Activated naive CD4-positive, alpha-beta T cell treated with anti-CD3 and anti-CD28 coated beads, Interleukin-2, amount 10 ng/mL, durations not matched to agents 7 days and 5 days (primary cell): ENCODE measurements at regions of chr15 and their contacts with region 1.

Region 1: GRCh38 chr15:78195735-78196201 is 38.6 kb downstream of the ACSBG1 start:
- DNase-seq: peak; percentile 63
- H3K4me3 Mint-ChIP-seq: no peak overlapping the region
- H3K27ac Mint-ChIP-seq: no peak overlapping the region
- H3K4me1 Mint-ChIP-seq: no peaks in the 10 kb centered on the region
- H3K27me3 Mint-ChIP-seq: peaks cover 36% of the 10 kb centered on the region

Region 2: GRCh38 chr15:77966540-77967290 is 229.1 kb before region 1 on chr15:
- CTCF ChIA-PET with region 1: interaction called, 14 read pairs
- DNase-seq: peak; percentile 67
- H3K4me3 Mint-ChIP-seq: no peak overlapping the region
- H3K27ac Mint-ChIP-seq: no peak overlapping the region
- H3K4me1 Mint-ChIP-seq: no peaks in the 10 kb centered on the region
- H3K27me3 Mint-ChIP-seq: peaks cover 39% of the 10 kb centered on the region

Region 3: DNA sequence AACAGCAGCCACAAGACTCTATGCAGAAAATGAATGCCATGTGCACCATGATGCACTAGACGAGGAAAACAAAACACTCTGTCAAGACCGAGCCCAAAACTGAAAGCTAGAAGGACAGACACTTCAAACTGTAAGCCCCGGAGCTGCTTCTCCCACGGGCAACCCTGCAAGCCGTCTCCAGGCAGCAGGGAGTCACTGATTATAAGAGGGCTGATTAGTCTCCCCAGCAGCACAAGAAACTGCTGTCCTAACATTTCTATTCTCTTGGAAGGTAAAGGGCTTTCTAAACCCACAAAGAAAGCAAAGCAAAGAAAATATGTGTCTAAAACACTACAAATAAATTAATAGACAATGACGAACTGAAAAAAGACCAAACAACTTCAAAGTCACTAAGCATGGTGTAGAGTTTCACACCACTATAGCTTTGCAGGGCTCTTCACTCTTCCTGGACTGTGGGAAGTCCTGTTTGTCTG is 133.8 kb before region 1 on chr15:
- CTCF ChIA-PET with region 1: no interaction called
- DNase-seq: peak; percentile 68
- H3K4me3 Mint-ChIP-seq: peak overlapping the region; percentile 60
- H3K27ac Mint-ChIP-seq: peak overlapping the region; percentile 95
- H3K4me1 Mint-ChIP-seq: peaks cover 36% of the 10 kb centered on the region
- H3K27me3 Mint-ChIP-seq: no peaks in the 10 kb centered on the region

Region 4: GRCh38 chr15:78131295-78132061 is 64.3 kb before region 1 on chr15 and contains the start of gene CIB2:
- CTCF ChIA-PET with region 1: interaction called, 176 read pairs
- DNase-seq: peak; percentile 84
- H3K4me3 Mint-ChIP-seq: peak within 1 kb of the TSS; percentile 76
- H3K27ac Mint-ChIP-seq: peak within 1 kb of the TSS; percentile 34
- H3K4me1 Mint-ChIP-seq: peaks cover 24% of the 10 kb centered on the region
- H3K27me3 Mint-ChIP-seq: peaks cover 11% of the 10 kb centered on the region

Region 5: DNA sequence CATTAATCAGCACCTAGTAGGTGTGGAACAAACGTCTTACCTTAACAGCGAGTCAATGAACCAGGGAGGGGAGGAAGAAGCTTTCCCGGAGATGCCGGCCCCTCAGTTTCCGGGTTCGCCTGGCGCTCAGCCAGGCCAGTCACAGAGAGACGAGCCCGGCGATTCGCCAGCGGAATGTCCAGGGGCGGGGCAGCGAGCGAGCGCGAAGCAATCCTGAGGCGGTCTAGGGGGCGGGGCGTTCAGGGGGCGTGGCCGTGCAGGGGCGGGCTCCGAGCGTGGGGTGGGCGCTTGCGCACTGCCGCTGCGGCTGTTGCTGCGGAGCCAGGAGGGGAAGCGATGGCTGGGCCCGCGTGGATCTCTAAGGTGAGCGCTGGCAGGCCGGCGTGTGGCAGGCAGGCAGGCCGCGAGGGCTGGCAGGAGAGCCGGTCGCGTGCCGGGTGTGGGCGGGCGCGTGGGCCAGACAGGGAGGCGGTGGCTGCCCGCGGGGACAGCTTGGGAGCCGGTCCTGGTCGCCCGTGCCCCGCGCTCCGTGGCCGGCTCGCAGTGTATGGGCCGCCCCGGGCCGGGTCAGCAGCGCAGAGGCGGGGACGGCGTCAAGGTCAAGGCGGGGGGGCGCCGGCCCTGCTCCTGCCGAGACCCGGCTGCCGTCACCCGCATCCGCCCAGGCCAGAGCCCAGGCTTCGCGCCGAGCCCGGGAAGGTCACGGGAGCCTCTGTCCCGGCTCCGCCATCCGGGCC is 46.5 kb before region 1 on chr15 and contains the start of gene IDH3A:
- CTCF ChIA-PET with region 1: interaction called, 11 read pairs
- DNase-seq: peak; percentile 100
- H3K4me3 Mint-ChIP-seq: peak within 1 kb of the TSS; percentile 90
- H3K27ac Mint-ChIP-seq: peak within 1 kb of the TSS; percentile 88
- H3K4me1 Mint-ChIP-seq: peaks cover 46% of the 10 kb centered on the region
- H3K27me3 Mint-ChIP-seq: no peaks in the 10 kb centered on the region

Region 6: GRCh38 chr15:78177447-78177873 is 18.3 kb before region 1 on chr15:
- CTCF ChIA-PET with region 1: interaction called, 35 read pairs
- DNase-seq: peak; percentile 57
- H3K4me3 Mint-ChIP-seq: no peak overlapping the region
- H3K27ac Mint-ChIP-seq: no peak overlapping the region
- H3K4me1 Mint-ChIP-seq: peaks cover 25% of the 10 kb centered on the region
- H3K27me3 Mint-ChIP-seq: peaks cover 18% of the 10 kb centered on the region

Region 7: DNA sequence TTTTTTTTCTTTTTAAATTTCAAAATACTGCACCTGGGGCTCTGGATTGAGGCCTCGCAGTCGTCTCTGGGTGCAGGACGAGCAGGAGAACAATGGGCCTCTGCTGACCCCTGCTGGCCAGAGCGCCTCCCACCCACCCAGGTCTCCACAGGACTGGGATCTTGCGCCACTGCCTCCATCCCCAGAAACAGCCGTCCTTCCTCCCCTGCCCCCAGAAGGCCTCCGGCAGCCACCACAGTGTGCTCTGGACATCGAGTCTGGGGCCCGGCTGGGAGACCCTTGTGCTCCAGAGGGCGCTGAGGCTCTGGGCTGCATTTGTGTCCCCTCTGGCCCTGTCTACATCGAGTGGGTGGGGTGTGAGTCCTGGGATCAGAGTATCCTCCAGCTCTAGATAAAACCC is 45.2 kb after region 1 on chr15:
- CTCF ChIA-PET with region 1: interaction called, 36 read pairs
- DNase-seq: peak; percentile 90
- H3K4me3 Mint-ChIP-seq: no peak overlapping the region
- H3K27ac Mint-ChIP-seq: no peak overlapping the region
- H3K4me1 Mint-ChIP-seq: peaks cover 3% of the 10 kb centered on the region
- H3K27me3 Mint-ChIP-seq: peaks cover 52% of the 10 kb centered on the region

Region 8: DNA sequence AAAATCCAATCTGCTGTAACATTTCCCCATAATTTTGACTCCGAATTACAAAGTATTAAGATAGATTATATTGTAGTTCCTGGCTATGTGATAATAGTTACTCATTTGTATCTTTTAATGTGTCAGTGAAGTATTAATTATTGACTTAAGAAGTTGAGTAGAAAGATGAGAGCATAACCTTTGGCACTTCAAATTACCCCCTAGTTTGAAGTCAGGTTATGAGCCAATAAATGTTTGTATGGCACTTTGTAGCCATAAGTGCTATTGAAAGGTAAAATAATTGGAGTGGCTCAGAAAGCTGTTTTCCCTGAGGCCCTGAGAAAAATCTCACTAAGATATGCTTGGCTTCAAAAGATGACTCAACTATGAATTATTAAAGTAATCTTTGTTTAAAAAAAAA is 273.3 kb after region 1 on chr15:
- CTCF ChIA-PET with region 1: no interaction called
- DNase-seq: no peak
- H3K4me3 Mint-ChIP-seq: no peak overlapping the region
- H3K27ac Mint-ChIP-seq: no peak overlapping the region
- H3K4me1 Mint-ChIP-seq: no peaks in the 10 kb centered on the region
- H3K27me3 Mint-ChIP-seq: no peaks in the 10 kb centered on the region